ENCODE measurements at regions of chr11 and their contacts with region 1.

Region 1: GRCh38 chr11:117817368-117818040 is 7.0 kb downstream of the FXYD2 start:
- DNase-seq: peak; percentile 85
- H3K4me3 Mint-ChIP-seq: no peak overlapping the region
- H3K27ac Mint-ChIP-seq: peak overlapping the region; percentile 92
- H3K4me1 Mint-ChIP-seq: peaks cover 64% of the 10 kb centered on the region
- H3K27me3 Mint-ChIP-seq: no peaks in the 10 kb centered on the region

Region 2: DNA sequence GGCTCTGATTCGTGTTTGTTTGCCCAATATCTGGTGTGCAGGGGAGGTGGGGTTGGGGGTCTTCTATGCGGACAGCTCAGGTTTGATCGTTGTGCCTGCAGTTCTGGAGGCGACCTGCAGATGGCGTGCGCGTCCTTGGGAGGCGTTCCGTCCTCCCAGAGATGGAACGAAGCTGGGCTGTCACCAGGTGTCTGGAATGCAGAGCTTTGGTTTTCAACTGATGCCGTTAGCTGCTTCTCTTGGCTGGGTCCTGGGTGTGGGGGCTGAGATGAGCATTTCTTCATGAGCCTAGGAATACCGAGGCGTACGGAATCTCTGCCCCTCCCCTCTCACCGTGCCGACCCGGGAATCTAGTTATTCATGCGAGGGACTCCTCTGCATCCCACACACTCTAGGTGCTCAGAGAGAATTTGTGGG is 391.2 kb before region 1 on chr11:
- CTCF ChIA-PET with region 1: interaction called, 16 read pairs
- POLR2A ChIA-PET with region 1: no interaction called
- DNase-seq: peak; percentile 70
- H3K4me3 Mint-ChIP-seq: no peak overlapping the region
- H3K27ac Mint-ChIP-seq: no peak overlapping the region
- H3K4me1 Mint-ChIP-seq: no peaks in the 10 kb centered on the region
- H3K27me3 Mint-ChIP-seq: peaks cover 3% of the 10 kb centered on the region

Region 3: GRCh38 chr11:117828611-117829368 is 11.3 kb after region 1 on chr11:
- CTCF ChIA-PET with region 1: interaction called, 48 read pairs
- POLR2A ChIA-PET with region 1: interaction called, 5 read pairs
- DNase-seq: peak; percentile 70
- H3K4me3 Mint-ChIP-seq: peak overlapping the region; percentile 13
- H3K27ac Mint-ChIP-seq: peak overlapping the region; percentile 82
- H3K4me1 Mint-ChIP-seq: peaks cover 58% of the 10 kb centered on the region
- H3K27me3 Mint-ChIP-seq: peaks cover 2% of the 10 kb centered on the region

Region 4: DNA sequence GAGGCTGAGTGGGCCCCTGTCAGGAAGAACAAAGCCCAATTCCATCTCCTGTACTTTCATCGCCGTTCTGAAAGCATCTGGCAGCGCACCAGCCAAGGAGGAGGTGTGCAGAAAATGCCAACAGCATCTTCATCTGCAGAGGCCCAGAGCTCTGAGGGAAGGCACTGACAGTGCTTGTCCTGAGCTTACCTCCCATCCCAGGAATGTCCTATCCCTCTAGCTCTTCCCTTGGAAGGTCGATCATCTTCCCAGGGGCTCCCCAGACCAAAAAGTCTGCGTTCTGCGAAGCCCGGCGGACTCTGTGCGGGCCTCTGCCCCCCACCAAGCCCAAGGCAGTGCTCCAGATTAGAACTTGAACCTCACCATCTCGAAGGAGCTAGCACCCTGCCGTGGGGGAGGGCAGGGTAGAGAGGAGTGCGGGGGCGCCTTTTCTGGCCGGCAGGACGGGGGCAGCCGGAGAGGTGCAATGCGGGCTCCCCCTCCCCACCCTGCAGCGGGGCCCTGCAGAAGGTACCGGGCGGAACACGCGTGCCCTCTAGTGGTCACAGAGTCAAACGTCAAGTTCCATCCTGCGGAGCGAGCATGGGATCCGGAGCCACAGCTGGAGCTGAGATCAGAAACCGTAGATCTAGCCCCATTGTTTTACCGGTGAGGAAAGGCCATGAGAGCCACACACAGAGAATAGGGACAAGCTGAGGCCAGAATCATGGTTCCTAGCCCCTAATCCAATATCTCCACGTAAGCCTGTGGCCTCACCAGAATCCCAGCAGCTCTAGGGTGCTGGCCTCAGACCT is 354.0 kb after region 1 on chr11:
- CTCF ChIA-PET with region 1: interaction called, 10 read pairs
- POLR2A ChIA-PET with region 1: no interaction called
- DNase-seq: peak; percentile 84
- H3K4me3 Mint-ChIP-seq: no peak overlapping the region
- H3K27ac Mint-ChIP-seq: no peak overlapping the region
- H3K4me1 Mint-ChIP-seq: peaks cover 5% of the 10 kb centered on the region
- H3K27me3 Mint-ChIP-seq: peaks cover 16% of the 10 kb centered on the region